Dorsolateral prefrontal cortex (tissue), 120 donors: ENCODE measurements at regions of chr19 and their contacts with region 1.

Region 1: GRCh38 chr19:40633207-40633606 is 32.0 kb downstream of the LTBP4 start:
- DNase-seq: no peak
- H3K4me3 ChIP-seq: no peak overlapping the region
- H3K27ac ChIP-seq: no peak overlapping the region
- H3K27me3 ChIP-seq: peaks cover 0 to 2% (median 0%) of the 10 kb centered on the region in 45 donors
- CTCF ChIP-seq: no peak

Region 2: GRCh38 chr19:39607026-39607425 is 1026.2 kb before region 1 on chr19:
- intact Hi-C with region 1: no loop called
- DNase-seq: no peak
- H3K4me3 ChIP-seq: no peak overlapping the region
- H3K27ac ChIP-seq: no peak overlapping the region
- H3K27me3 ChIP-seq: peaks cover 0 to 8% (median 0%) of the 10 kb centered on the region in 45 donors
- CTCF ChIP-seq: no peak

Region 3: GRCh38 chr19:40598121-40598917 is 34.9 kb before region 1 on chr19:
- intact Hi-C with region 1: loop called in 1 of 2 experiments (anchors 5 kb)
- DNase-seq: peak; percentile 80 to 92 (median 87)
- H3K4me3 ChIP-seq: peak overlapping the region in 41 of 59 donors; percentile 1 to 52 (median 26)
- H3K27ac ChIP-seq: no peak overlapping the region
- H3K27me3 ChIP-seq: peaks cover 0 to 15% (median 0%) of the 10 kb centered on the region in 45 donors
- CTCF ChIP-seq: peak; percentile 82 to 100 (median 98)